Dorsolateral prefrontal cortex (tissue), 120 donors: ENCODE measurements at regions of chr10 and their contacts with region 1.

Region 1: GRCh38 chr10:72375585-72375984 is 20.9 kb upstream of the DNAJB12 start:
- DNase-seq: peak in 7 of 10 donors; percentile 37 to 70 (median 60)
- H3K4me3 ChIP-seq: no peak overlapping the region
- H3K27ac ChIP-seq: peak overlapping the region in 1 of 59 donors; percentile 13
- H3K27me3 ChIP-seq: no peaks in the 10 kb centered on the region
- CTCF ChIP-seq: peak in 51 of 56 donors; percentile 25 to 71 (median 50)

Region 2: GRCh38 chr10:72426986-72427385 is 51.4 kb after region 1 on chr10:
- intact Hi-C with region 1: loop called in 1 of 2 experiments (anchors 5 kb)
- DNase-seq: peak in 2 of 10 donors; percentile 10 to 84
- H3K4me3 ChIP-seq: no peak overlapping the region
- H3K27ac ChIP-seq: peak overlapping the region in 51 of 59 donors; percentile 0 to 94 (median 65)
- H3K27me3 ChIP-seq: no peaks in the 10 kb centered on the region
- CTCF ChIP-seq: no peak

Region 3: GRCh38 chr10:72567884-72568640 is 192.5 kb after region 1 on chr10:
- intact Hi-C with region 1: loop called (anchors 5 to 10 kb)
- DNase-seq: no peak
- H3K4me3 ChIP-seq: no peak overlapping the region
- H3K27ac ChIP-seq: no peak overlapping the region
- H3K27me3 ChIP-seq: no peaks in the 10 kb centered on the region
- CTCF ChIP-seq: peak; percentile 22 to 79 (median 55)

Region 4: GRCh38 chr10:72574636-72575035 is 199.1 kb after region 1 on chr10:
- intact Hi-C with region 1: loop called (anchors 5 to 10 kb)
- DNase-seq: no peak
- H3K4me3 ChIP-seq: peak overlapping the region in 3 of 59 donors; percentile 1 to 5 (median 4)
- H3K27ac ChIP-seq: peak overlapping the region in 34 of 59 donors; percentile 2 to 73 (median 40)
- H3K27me3 ChIP-seq: no peaks in the 10 kb centered on the region
- CTCF ChIP-seq: no peak